GM12878 (cell line): ENCODE measurements at regions of chr1 and their contacts with region 1.

Region 1: DNA sequence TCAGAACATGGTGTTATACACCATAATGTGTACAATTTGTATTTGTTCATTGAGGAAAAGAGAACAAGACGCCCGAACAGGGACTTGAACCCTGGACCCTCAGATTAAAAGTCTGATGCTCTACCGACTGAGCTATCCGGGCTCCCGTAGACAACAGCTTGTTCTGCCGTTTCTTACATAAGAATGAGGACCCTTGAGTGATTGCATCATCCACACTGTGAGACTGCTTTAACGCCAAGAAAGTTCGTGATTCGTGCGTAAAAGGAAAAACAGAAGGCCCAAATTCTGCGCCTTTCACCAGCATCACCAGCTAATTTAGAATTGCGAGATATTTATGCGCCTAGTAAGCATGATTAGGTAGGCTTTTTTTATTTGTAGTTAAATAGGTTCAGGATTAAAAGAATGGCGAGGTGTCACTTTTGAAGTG is 9.2 kb upstream of the MDM4 start:
- DNase-seq: peak; percentile 97
- ATAC-seq: peak; percentile 83
- H3K4me3 ChIP-seq: peak overlapping the region; percentile 77
- H3K27ac ChIP-seq: peak overlapping the region; percentile 59
- H3K4me1 ChIP-seq: peaks cover 4% of the 10 kb centered on the region
- H3K27me3 ChIP-seq: no peaks in the 10 kb centered on the region
- CTCF ChIP-seq: no peak
- EP300 ChIP-seq: peak in 1 of 2 experiments; percentile 29; a peak in 1 of 4 replicates
- POLR2A ChIP-seq: peak; percentile 42; the same call in 1 of the 2 replicates
- RAD21 ChIP-seq: no peak

Region 2: GRCh38 chr1:204162231-204163074 is 344.5 kb before region 1 on chr1:
- CTCF ChIA-PET with region 1: interaction called, 4 read pairs
- POLR2A ChIA-PET with region 1: no interaction called
- RAD21 ChIA-PET with region 1: interaction called, 3 read pairs
- SMC1A ChIA-PET with region 1: interaction called, 4 read pairs
- in situ Hi-C with region 1: loop called (anchors 10 kb)
- intact Hi-C with region 1: loop called (anchors 10 kb)
- DNase-seq: no peak
- ATAC-seq: peak; percentile 99
- H3K4me3 ChIP-seq: no peak overlapping the region
- H3K27ac ChIP-seq: no peak overlapping the region
- H3K4me1 ChIP-seq: no peaks in the 10 kb centered on the region
- H3K27me3 ChIP-seq: no peaks in the 10 kb centered on the region; a peak in 1 of 4 replicates
- CTCF ChIP-seq: peak; percentile 94 to 99 (median 99)
- EP300 ChIP-seq: no peak
- POLR2A ChIP-seq: no peak
- RAD21 ChIP-seq: peak; percentile 84

Region 3: GRCh38 chr1:204431310-204432165 is 75.4 kb before region 1 on chr1:
- CTCF ChIA-PET with region 1: interaction called, 2,021 read pairs
- POLR2A ChIA-PET with region 1: interaction called, 6 read pairs
- RAD21 ChIA-PET with region 1: interaction called, 34 read pairs
- SMC1A ChIA-PET with region 1: interaction called, 939 read pairs
- in situ Hi-C with region 1: no loop called
- intact Hi-C with region 1: loop called (anchors 1 kb)
- DNase-seq: no peak
- ATAC-seq: peak; percentile 99
- H3K4me3 ChIP-seq: no peak overlapping the region
- H3K27ac ChIP-seq: no peak overlapping the region
- H3K4me1 ChIP-seq: no peaks in the 10 kb centered on the region
- H3K27me3 ChIP-seq: no peaks in the 10 kb centered on the region
- CTCF ChIP-seq: peak; percentile 86 to 95 (median 94)
- EP300 ChIP-seq: no peak
- POLR2A ChIP-seq: no peak
- RAD21 ChIP-seq: peak; percentile 60

Region 4: DNA sequence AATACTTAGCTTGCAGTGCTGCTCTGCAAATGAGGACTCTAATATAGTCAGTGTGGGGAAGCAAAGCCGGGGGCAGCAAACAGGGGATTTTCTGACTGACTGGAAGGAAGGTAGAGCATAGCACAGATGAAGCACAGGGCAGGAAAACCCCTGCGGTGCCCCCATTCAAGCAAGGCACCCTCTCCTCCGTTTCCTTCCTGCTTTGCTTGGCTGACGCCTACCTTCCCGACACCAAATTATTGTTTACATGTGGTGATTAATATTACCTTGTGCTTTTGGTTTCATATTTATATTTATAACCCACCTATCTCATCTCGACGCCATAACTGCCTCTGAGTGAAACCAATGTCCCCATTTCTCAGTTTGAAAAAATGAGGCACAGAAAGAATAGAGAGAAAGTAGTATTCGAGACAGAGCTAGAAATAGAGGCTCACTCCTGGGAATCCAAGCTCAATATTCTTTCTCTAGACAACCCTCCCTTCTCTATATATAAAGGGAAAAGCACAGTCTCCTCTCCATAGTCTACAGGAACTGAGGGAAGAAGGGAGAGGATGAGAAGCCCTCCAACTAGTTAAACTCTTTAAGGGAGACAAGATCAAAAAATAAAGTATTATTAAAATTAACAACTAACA is 53.7 kb before region 1 on chr1:
- CTCF ChIA-PET with region 1: interaction called, 2,021 read pairs
- POLR2A ChIA-PET with region 1: interaction called, 3 read pairs
- RAD21 ChIA-PET with region 1: interaction called, 441 read pairs
- SMC1A ChIA-PET with region 1: interaction called, 939 read pairs
- in situ Hi-C with region 1: loop called (anchors 5 kb)
- intact Hi-C with region 1: no loop called
- DNase-seq: peak; percentile 84
- ATAC-seq: peak; percentile 97
- H3K4me3 ChIP-seq: 0 out of 2 replicates have a peak overlapping the region, but pooled peaks have one; percentile 9
- H3K27ac ChIP-seq: peak overlapping the region; percentile 81
- H3K4me1 ChIP-seq: peaks cover 17% of the 10 kb centered on the region
- H3K27me3 ChIP-seq: no peaks in the 10 kb centered on the region
- CTCF ChIP-seq: no peak
- EP300 ChIP-seq: no peak; a peak in 1 of 4 replicates
- POLR2A ChIP-seq: no peak
- RAD21 ChIP-seq: no peak

Region 5: DNA sequence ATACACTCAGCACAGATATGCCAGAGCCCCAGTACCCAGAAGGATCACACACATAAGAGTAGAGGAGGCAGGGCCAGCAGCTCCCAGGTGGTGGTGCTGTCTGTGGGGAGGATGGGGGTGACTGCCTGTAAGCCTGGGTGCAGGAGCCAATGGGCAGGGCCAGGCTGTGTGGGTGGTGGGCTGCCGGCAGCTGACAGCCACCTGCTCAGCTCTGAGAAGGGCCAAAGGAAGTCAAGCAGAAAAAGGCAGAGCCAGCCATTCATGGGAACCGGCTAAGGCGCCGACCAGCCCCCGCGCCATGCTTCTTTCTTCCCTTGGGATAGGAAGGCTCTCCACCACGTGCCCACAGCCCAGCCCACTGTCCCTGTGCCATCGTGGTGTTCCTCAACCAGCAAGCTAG is 26.5 kb before region 1 on chr1:
- CTCF ChIA-PET with region 1: interaction called, 471 read pairs
- POLR2A ChIA-PET with region 1: interaction called, 9 read pairs
- RAD21 ChIA-PET with region 1: interaction called, 267 read pairs
- SMC1A ChIA-PET with region 1: interaction called, 408 read pairs
- in situ Hi-C with region 1: no loop called
- intact Hi-C with region 1: no loop called
- DNase-seq: no peak
- ATAC-seq: peak; percentile 81
- H3K4me3 ChIP-seq: no peak overlapping the region
- H3K27ac ChIP-seq: peak overlapping the region; percentile 84
- H3K4me1 ChIP-seq: peaks cover 45% of the 10 kb centered on the region
- H3K27me3 ChIP-seq: no peaks in the 10 kb centered on the region
- CTCF ChIP-seq: peak; percentile 20 to 24 (median 23); a peak in 2 of 6 replicates
- EP300 ChIP-seq: no peak; a peak in 1 of 4 replicates
- POLR2A ChIP-seq: no peak
- RAD21 ChIP-seq: peak; percentile 39; the same call in 1 of the 2 replicates

Region 6: GRCh38 chr1:204523605-204524215 is 16.7 kb after region 1 on chr1:
- CTCF ChIA-PET with region 1: interaction called, 5 read pairs
- POLR2A ChIA-PET with region 1: interaction called, 55 read pairs
- RAD21 ChIA-PET with region 1: interaction called, 69 read pairs
- SMC1A ChIA-PET with region 1: interaction called, 57 read pairs
- in situ Hi-C with region 1: no loop called
- intact Hi-C with region 1: no loop called
- DNase-seq: no peak
- ATAC-seq: no peak
- H3K4me3 ChIP-seq: no peak overlapping the region
- H3K27ac ChIP-seq: peak overlapping the region; percentile 1; the same call in 1 of the 2 replicates
- H3K4me1 ChIP-seq: peaks cover 35% of the 10 kb centered on the region
- H3K27me3 ChIP-seq: no peaks in the 10 kb centered on the region
- CTCF ChIP-seq: no peak
- EP300 ChIP-seq: no peak
- POLR2A ChIP-seq: no peak
- RAD21 ChIP-seq: no peak

Region 7: DNA sequence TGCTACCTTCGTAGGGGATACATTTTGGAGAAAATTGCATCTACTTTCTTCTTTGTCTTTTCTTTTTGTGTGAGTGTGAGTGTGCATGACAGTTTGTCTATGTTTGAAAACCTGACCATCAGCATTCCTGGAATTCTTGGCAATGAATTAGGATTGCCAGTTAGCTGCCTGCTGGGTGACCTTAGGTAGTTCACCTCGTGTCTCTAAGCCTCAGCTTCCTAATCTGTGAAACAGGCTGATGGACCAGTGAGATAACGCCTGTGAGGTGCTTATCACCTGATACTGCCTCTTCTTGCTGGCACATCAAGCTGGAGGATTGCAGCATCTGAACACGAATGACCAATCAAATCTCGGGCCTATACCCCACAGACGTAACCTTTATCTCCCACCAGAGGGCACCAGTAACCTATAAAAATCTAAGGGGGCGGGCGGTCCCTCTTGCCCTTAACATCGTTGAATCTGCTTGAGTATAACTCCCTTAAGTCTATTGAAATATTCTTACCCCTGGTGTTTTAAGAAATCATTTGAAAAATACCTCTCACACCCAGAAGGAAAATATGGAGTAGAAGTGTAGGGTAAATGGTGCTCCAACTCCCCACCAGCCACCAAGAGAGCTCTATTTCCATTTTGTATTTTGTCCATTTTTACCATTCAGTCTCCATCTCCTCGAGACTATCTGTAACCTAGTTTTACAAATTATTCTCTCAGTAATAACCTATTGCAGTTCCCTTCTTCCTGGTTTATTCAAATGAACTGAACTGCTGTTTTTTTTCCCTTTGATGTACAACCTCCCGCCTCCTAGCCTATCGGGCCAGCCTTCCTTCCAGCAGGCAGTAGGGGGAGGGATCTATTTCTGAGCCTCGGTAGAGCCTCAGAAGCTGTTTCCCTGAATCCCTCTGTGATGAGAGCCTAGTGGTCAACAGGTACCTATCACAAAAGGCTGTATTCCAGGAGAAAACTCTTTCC is 58.9 kb after region 1 on chr1:
- CTCF ChIA-PET with region 1: interaction called, 11 read pairs
- POLR2A ChIA-PET with region 1: interaction called, 4 read pairs
- RAD21 ChIA-PET with region 1: interaction called, 22 read pairs
- SMC1A ChIA-PET with region 1: interaction called, 14 read pairs
- in situ Hi-C with region 1: no loop called
- intact Hi-C with region 1: loop called (anchors 5 kb)
- DNase-seq: no peak
- ATAC-seq: peak; percentile 87
- H3K4me3 ChIP-seq: no peak overlapping the region
- H3K27ac ChIP-seq: peak overlapping the region; percentile 45
- H3K4me1 ChIP-seq: peaks cover 24% of the 10 kb centered on the region
- H3K27me3 ChIP-seq: no peaks in the 10 kb centered on the region
- CTCF ChIP-seq: peak; percentile 58 to 78 (median 72)
- EP300 ChIP-seq: no peak
- POLR2A ChIP-seq: no peak
- RAD21 ChIP-seq: peak; percentile 78